Caco-2 (cell line): ENCODE measurements at regions of chr19 and their contacts with region 1.

Region 1: DNA sequence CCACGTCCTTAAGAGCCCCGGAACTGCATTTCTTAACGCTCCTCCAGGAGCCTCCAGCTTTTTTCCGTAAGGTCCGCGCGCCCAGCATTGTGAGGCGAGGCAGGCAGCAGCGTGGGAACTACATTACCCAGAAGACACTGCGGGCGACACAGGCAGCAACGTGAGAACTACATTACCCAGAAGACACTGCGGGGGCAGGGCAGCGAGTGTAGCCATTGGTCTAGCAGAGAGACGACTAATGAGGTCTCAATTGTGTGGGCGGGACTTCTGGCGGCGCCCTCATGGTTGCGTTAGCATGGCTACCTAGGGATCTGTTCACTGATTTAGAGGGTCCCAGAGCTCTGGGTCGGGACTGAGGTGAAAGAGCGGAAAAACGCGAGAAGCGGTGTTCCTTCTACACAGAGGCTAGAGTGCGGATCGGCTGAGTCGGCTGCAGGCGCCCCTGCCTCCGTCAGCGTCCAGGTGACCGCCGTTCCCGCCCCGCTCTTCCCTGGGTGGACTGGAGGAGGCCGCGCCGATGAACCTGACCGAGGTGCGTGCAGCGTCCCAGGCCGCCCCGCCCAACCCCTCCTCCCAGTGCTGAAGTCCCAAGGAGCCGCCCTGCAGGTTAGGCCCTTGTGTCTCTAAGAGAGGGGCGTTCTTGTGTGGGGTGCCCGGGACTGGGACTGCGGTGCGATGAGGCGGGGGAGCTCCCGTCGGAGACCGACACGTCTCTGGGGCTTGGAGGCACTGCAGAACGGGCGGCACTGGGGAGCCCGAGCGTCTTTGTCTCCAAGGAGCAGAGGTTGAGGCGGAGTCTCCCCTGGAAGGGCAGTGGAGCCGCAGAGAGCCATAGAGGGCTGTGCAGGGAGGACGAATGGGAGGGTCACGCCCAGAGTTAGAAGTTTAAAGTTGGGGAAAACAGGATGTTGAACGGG is at the start of gene ZNF749:
- DNase-seq: peak; percentile 98 to 99
- H3K4me3 ChIP-seq: peak within 1 kb of the TSS; percentile 71
- H3K4me3 Mint-ChIP-seq: peak within 1 kb of the TSS; percentile 92
- H3K27ac Mint-ChIP-seq: peak within 1 kb of the TSS; percentile 91
- H3K4me1 ChIP-seq: peaks cover 9% of the 10 kb centered on the region; the same call in 1 of the 2 replicates
- H3K4me1 Mint-ChIP-seq: peaks cover 19% of the 10 kb centered on the region
- H3K27me3 ChIP-seq: no peaks in the 10 kb centered on the region
- H3K27me3 Mint-ChIP-seq: no peaks in the 10 kb centered on the region
- CTCF ChIP-seq: no peak
- total RNA-seq, gene ZNF749: 14.6 and 15.9 TPM in 2 replicates

Region 2: DNA sequence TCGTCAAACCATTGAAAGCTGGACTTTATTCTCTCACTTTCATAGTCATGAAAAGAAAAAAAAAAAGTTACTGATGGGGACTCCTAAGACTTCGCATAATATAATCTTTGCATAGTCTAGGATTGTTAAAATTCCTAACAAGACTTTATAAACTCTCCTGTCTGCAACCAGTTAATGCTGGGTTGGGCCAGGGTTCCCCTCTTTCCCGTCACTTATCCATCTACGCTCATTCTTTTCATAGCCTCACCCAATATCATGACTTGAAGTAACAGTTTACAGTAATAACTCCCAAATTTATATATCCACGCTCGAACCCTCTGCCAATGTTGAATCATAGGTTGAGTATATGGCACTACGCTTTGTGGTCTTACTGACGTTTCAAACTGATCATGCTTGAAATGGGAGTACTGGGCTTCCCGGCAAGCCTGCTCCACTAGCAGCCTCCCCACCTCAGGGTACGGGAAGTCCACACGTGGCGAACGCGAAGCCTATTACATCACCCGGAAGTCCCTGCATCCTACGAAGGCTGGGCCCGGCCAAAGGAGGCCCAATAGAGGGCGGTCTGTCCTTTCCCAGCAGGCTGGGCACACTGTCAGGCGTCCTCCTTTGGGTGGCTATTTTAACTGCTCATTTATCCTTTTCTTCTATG is 155.8 kb before region 1 on chr19:
- CTCF ChIA-PET with region 1: no interaction called
- POLR2A ChIA-PET with region 1: interaction called, 3 read pairs
- intact Hi-C with region 1: loop called (anchors 5 kb)
- DNase-seq: peak; percentile 94 to 97
- H3K4me3 ChIP-seq: peak overlapping the region; percentile 74
- H3K4me3 Mint-ChIP-seq: no peak overlapping the region
- H3K27ac Mint-ChIP-seq: no peak overlapping the region
- H3K4me1 ChIP-seq: no peaks in the 10 kb centered on the region; the same call in none of the 2 replicates
- H3K4me1 Mint-ChIP-seq: peaks cover 11% of the 10 kb centered on the region
- H3K27me3 ChIP-seq: no peaks in the 10 kb centered on the region
- H3K27me3 Mint-ChIP-seq: no peaks in the 10 kb centered on the region
- CTCF ChIP-seq: peak in 1 of 2 experiments; percentile 52

Region 3: DNA sequence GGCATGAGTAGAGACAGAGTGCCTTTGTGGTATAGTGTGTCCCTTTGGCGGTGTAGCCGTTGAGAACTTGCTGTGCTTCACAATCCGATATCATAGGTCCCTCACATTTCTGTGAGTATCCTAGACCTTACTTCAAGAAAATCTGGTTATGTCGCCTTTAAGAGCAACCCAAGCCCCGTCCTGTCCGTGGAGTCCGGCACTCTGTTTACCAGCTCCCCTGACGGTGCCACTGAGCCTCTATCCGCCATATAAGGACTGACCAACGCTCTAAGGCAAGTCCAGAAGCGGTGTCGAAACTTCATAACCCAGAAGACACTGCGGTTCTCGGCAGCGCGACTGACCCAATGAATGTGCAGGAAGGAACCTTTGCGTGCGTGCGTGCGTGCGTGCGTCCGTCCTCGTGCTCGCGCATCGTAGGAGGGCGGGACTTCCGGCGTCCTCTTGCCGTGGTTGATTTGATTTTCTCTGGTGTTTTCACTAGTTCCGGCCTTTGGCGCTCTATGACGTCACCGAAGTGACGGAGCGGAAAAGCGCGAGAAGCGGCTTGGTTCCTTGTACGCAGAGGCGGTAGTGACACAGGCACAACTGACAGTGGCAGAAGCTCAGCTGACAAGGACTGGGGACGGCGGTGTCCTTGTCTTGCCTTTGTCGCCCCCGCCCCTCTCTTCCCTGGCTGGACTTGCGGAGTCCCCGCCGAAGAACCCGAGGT is 72.2 kb before region 1 on chr19 and contains the starts of genes TRAPPC2B and ZNF547:
- CTCF ChIA-PET with region 1: no interaction called
- POLR2A ChIA-PET with region 1: no interaction called
- intact Hi-C with region 1: loop called (anchors 1 kb)
- DNase-seq: peak; percentile 98 to 99
- H3K4me3 ChIP-seq: peak within 1 kb of the TSS; percentile 77
- H3K4me3 Mint-ChIP-seq: peak within 1 kb of the TSS; percentile 84
- H3K27ac Mint-ChIP-seq: peak within 1 kb of the TSS; percentile 95
- H3K4me1 ChIP-seq: peaks cover 3% of the 10 kb centered on the region; the same call in 1 of the 2 replicates
- H3K4me1 Mint-ChIP-seq: peaks cover 21% of the 10 kb centered on the region
- H3K27me3 ChIP-seq: no peaks in the 10 kb centered on the region
- H3K27me3 Mint-ChIP-seq: no peaks in the 10 kb centered on the region
- CTCF ChIP-seq: no peak
- total RNA-seq, gene TRAPPC2B: 7.0 and 8.6 TPM in 2 replicates
- total RNA-seq, gene ZNF547: 0.95 and 1.8 TPM in 2 replicates

Region 4: GRCh38 chr19:57410877-57411671 is 24.2 kb before region 1 on chr19 and contains the start of gene ZNF17:
- CTCF ChIA-PET with region 1: no interaction called
- POLR2A ChIA-PET with region 1: no interaction called
- intact Hi-C with region 1: loop called (anchors 1 kb)
- DNase-seq: peak; percentile 93 to 94
- H3K4me3 ChIP-seq: peak within 1 kb of the TSS; percentile 96
- H3K4me3 Mint-ChIP-seq: peak within 1 kb of the TSS; percentile 85
- H3K27ac Mint-ChIP-seq: peak within 1 kb of the TSS; percentile 42
- H3K4me1 ChIP-seq: no peaks in the 10 kb centered on the region
- H3K4me1 Mint-ChIP-seq: peaks cover 16% of the 10 kb centered on the region
- H3K27me3 ChIP-seq: no peaks in the 10 kb centered on the region
- H3K27me3 Mint-ChIP-seq: no peaks in the 10 kb centered on the region
- CTCF ChIP-seq: no peak
- total RNA-seq, gene ZNF17: 7.2 and 9.5 TPM in 2 replicates

Region 5: GRCh38 chr19:57452307-57452706 is 17.0 kb after region 1 on chr19:
- CTCF ChIA-PET with region 1: no interaction called
- POLR2A ChIA-PET with region 1: no interaction called
- intact Hi-C with region 1: no loop called
- DNase-seq: no peak
- H3K4me3 ChIP-seq: no peak overlapping the region
- H3K4me3 Mint-ChIP-seq: no peak overlapping the region
- H3K27ac Mint-ChIP-seq: no peak overlapping the region
- H3K4me1 ChIP-seq: no peaks in the 10 kb centered on the region
- H3K4me1 Mint-ChIP-seq: no peaks in the 10 kb centered on the region
- H3K27me3 ChIP-seq: no peaks in the 10 kb centered on the region
- H3K27me3 Mint-ChIP-seq: no peaks in the 10 kb centered on the region
- CTCF ChIP-seq: no peak

Region 6: DNA sequence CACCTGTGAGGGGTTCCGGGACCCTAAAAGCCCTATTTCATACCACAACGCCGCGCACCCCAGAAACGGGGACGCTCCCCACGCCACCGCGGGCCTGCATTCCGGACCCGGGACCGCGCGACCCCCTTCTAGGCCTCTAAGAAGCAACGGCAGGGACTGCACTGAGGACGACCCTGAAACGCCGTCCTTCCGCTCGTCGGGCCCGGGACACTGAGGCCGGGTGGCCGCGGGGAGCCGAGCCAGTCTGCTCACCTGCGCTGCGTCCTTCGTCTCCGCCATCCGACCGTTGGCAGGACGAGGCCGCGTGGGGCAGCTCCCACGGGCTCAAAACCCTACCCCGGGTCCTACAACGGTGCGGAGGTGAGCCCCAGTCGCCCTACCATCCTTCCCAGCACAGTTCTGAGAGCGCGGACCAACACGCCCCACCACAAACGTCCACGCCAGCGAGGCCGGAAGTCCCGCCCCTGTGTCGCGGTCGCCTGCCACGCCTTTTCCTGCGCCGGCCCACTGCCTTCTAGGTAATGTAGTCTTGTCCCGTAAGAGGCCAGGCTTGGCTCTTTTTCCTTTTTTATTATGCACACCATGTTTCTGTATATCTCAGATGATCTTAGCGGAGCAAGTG is 124.2 kb after region 1 on chr19 and contains the start of gene ZNF550:
- CTCF ChIA-PET with region 1: no interaction called
- POLR2A ChIA-PET with region 1: no interaction called
- intact Hi-C with region 1: loop called (anchors 1 kb)
- DNase-seq: peak; percentile 89 to 90
- H3K4me3 ChIP-seq: peak within 1 kb of the TSS; percentile 91
- H3K4me3 Mint-ChIP-seq: peak within 1 kb of the TSS; percentile 99
- H3K27ac Mint-ChIP-seq: peak within 1 kb of the TSS; percentile 94
- H3K4me1 ChIP-seq: no peaks in the 10 kb centered on the region
- H3K4me1 Mint-ChIP-seq: peaks cover 11% of the 10 kb centered on the region
- H3K27me3 ChIP-seq: no peaks in the 10 kb centered on the region
- H3K27me3 Mint-ChIP-seq: no peaks in the 10 kb centered on the region
- CTCF ChIP-seq: no peak
- total RNA-seq, gene ZNF550: 11.2 and 11.5 TPM in 2 replicates

Region 7: GRCh38 chr19:57632987-57633831 is 197.9 kb after region 1 on chr19 and contains the start of gene ZNF211:
- CTCF ChIA-PET with region 1: no interaction called
- POLR2A ChIA-PET with region 1: no interaction called
- intact Hi-C with region 1: loop called (anchors 1 kb)
- DNase-seq: peak; percentile 94
- H3K4me3 ChIP-seq: peak within 1 kb of the TSS; percentile 95
- H3K4me3 Mint-ChIP-seq: peak within 1 kb of the TSS; percentile 86
- H3K27ac Mint-ChIP-seq: peak within 1 kb of the TSS; percentile 81
- H3K4me1 ChIP-seq: 0 out of 2 replicates have a peak, but pooled peaks cover 7% of the 10 kb centered on the region
- H3K4me1 Mint-ChIP-seq: peaks cover 12% of the 10 kb centered on the region
- H3K27me3 ChIP-seq: no peaks in the 10 kb centered on the region
- H3K27me3 Mint-ChIP-seq: no peaks in the 10 kb centered on the region
- CTCF ChIP-seq: no peak
- total RNA-seq, gene ZNF211: 10.5 and 13.3 TPM in 2 replicates

Region 8: GRCh38 chr19:57682226-57682766 is 247.0 kb after region 1 on chr19:
- CTCF ChIA-PET with region 1: no interaction called
- POLR2A ChIA-PET with region 1: interaction called, 11 read pairs
- intact Hi-C with region 1: no loop called
- DNase-seq: no peak
- H3K4me3 ChIP-seq: peak overlapping the region; percentile 98
- H3K4me3 Mint-ChIP-seq: peak overlapping the region; percentile 86
- H3K27ac Mint-ChIP-seq: peak overlapping the region; percentile 88
- H3K4me1 ChIP-seq: peaks cover 6% of the 10 kb centered on the region; the same call in 1 of the 2 replicates
- H3K4me1 Mint-ChIP-seq: peaks cover 21% of the 10 kb centered on the region
- H3K27me3 ChIP-seq: no peaks in the 10 kb centered on the region
- H3K27me3 Mint-ChIP-seq: no peaks in the 10 kb centered on the region
- CTCF ChIP-seq: no peak